PC-9 (cell line): ENCODE measurements at regions of chr10 and their contacts with region 1.

Region 1: DNA sequence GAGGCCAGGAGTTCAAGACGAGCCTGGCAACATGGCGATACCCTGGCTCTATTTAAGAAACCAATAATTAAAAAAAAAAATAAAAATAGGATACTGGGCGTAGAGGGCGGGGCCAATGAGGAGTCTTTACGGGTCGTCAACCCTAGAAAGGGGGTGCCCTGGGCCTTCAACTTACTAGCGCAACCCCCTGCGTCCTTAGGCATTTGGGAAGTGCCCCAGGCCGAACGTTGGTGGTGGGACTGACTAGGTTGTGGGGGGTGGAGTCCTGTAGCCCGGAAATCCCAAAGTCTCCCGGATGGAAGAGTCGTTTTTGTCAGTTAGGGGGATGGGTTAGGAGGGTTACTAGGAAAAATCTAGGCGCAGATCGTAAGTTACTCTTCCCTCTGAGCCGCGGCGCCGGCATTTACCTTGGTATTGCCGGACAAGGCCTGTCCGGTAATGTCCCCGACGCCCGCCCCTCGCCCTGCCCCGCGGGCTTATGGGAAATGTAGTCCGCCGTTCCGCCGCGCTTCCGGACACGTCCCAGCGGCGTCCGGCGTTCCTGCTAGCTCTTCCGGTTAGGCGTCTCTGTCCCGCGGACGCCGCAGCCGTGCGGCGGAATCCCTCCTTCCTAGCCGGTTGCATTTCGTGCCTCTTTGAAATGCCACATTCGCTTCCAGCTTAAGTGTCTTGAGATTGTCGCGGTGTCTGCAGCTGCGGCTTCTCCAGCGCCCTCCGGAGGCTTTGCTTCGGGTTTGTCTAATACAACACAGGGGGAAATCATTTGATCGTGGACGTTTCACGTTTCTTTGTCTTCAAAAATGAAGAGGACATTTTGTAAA is 1.3 kb upstream of the ACBD5 start:
- DNase-seq: peak; percentile 84 to 87
- H3K4me3 ChIP-seq: peak overlapping the region; percentile 72
- H3K27ac ChIP-seq: peak overlapping the region; percentile 74
- H3K4me1 ChIP-seq: peaks cover 14% of the 10 kb centered on the region; the same call in 1 of the 2 replicates
- H3K27me3 ChIP-seq: no peaks in the 10 kb centered on the region
- CTCF ChIP-seq: no peak; the same call in 1 of the 2 replicates

Region 2: GRCh38 chr10:26860443-26861204 is 381.2 kb before region 1 on chr10 and contains the start of gene ABI1:
- CTCF ChIA-PET with region 1: no interaction called
- POLR2A ChIA-PET with region 1: no interaction called
- intact Hi-C with region 1: loop called (anchors 2 kb)
- DNase-seq: peak; percentile 89 to 96
- H3K4me3 ChIP-seq: peak within 1 kb of the TSS; percentile 72
- H3K27ac ChIP-seq: peak within 1 kb of the TSS; percentile 85
- H3K4me1 ChIP-seq: peaks cover 11% of the 10 kb centered on the region
- H3K27me3 ChIP-seq: no peaks in the 10 kb centered on the region
- CTCF ChIP-seq: no peak
- total RNA-seq, gene ABI1: 41.3 and 50.8 TPM in 2 replicates

Region 3: DNA sequence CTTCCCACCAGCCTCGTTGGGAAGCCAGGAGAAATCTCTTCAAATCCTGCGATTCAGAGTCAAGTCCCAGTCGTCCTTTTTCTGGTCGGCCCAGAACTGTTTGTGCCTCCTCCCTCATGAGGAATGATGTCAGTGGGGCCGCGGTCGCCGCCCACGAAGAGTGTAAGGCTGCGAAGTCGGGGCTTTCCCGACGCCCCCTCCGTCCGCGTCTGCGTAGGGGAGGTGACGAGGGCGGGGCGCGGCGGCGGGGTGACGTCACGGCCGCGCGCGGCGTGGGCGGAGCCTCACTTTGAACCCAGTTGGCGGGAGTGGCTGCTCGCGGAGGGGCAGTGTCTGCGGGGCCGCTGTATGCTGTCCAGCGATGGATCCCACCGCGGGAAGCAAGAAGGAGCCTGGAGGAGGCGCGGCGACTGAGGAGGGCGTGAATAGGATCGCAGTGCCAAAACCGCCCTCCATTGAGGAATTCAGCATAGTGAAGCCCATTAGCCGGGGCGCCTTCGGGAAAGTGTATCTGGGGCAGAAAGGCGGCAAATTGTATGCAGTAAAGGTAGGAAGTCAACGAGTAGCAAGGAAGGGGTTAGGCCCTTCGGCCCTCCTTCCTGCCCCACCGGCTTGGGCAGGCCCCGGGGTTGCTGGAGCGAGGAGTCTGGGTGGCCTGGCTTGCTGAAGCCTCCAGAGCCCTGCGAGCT is 86.7 kb before region 1 on chr10 and contains the start of gene MASTL:
- CTCF ChIA-PET with region 1: no interaction called
- POLR2A ChIA-PET with region 1: interaction called, 13 read pairs
- intact Hi-C with region 1: loop called (anchors 2 kb)
- DNase-seq: peak; percentile 71 to 90
- H3K4me3 ChIP-seq: peak within 1 kb of the TSS; percentile 91
- H3K27ac ChIP-seq: peak within 1 kb of the TSS; percentile 97
- H3K4me1 ChIP-seq: peaks cover 18% of the 10 kb centered on the region
- H3K27me3 ChIP-seq: no peaks in the 10 kb centered on the region
- CTCF ChIP-seq: no peak
- total RNA-seq, gene MASTL: 13.0 and 17.4 TPM in 2 replicates

Region 4: DNA sequence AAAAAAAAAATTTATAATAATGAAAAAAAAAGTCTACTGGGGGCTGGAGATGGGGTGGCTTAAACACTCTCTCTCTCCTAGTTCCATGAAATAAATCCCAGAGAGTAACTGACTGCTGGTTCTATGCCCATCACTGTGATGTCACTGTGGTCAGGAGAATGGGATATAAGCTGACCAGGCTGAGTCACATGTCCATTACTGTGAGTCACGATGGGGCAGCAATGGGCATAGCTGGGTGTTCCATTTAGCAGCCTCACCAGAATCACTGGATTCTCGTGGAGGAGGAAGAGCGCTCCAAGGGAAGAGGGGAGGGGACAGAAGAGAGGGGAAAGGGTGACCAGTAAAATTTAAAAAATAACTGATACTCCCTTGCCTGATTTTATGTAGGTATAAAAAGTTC is 49.6 kb before region 1 on chr10:
- CTCF ChIA-PET with region 1: no interaction called
- POLR2A ChIA-PET with region 1: no interaction called
- intact Hi-C with region 1: loop called (anchors 2 kb)
- DNase-seq: peak; percentile 45 to 52
- H3K4me3 ChIP-seq: no peak overlapping the region
- H3K27ac ChIP-seq: no peak overlapping the region
- H3K4me1 ChIP-seq: no peaks in the 10 kb centered on the region
- H3K27me3 ChIP-seq: no peaks in the 10 kb centered on the region
- CTCF ChIP-seq: no peak

Region 5: GRCh38 chr10:27252267-27253000 is 10.6 kb after region 1 on chr10:
- CTCF ChIA-PET with region 1: no interaction called
- POLR2A ChIA-PET with region 1: no interaction called
- intact Hi-C with region 1: loop called (anchors 1 kb)
- DNase-seq: peak; percentile 44 to 88
- H3K4me3 ChIP-seq: peak overlapping the region; percentile 70
- H3K27ac ChIP-seq: peak overlapping the region; percentile 62
- H3K4me1 ChIP-seq: no peaks in the 10 kb centered on the region
- H3K27me3 ChIP-seq: no peaks in the 10 kb centered on the region
- CTCF ChIP-seq: peak; percentile 69

Region 6: DNA sequence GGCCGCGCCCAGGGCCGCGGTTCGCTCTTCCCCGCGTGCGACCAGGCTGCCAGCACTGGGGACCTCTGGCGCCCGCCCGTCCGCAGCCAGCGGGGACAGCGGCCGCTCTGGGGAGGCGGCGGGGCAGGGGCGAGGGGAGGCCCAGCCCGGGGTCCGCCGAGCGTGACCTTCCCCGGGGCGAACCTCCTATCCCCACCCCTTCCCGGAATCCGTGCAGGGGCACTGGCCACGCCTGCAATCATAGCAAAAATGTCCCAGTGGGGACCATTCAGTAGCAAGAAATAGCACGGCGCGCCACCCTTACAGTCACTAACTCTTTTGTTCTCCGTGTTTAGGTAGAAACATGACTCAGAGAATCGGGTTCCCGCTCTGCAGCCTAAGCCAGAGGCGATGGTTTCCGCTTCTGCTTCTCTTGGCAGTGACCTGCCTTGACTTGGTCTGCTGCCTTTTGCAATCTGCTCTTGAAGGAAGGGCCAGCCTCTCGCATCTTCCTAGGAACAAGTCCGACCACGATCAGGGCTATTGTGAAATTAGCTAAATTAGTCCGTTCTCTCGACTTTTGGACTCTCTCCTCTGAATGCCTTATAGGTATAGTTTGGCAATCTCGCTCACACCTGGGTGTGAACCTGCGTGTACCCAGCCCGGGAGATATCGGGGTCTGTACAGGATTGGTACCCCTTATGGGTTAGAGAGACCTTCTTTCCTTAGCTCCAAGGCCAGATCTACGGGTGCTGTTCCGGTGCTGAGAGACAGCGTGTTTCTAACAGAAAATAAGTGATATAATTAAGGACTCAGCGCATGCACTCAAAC is 78.1 kb after region 1 on chr10:
- CTCF ChIA-PET with region 1: no interaction called
- POLR2A ChIA-PET with region 1: no interaction called
- intact Hi-C with region 1: loop called (anchors 5 kb)
- DNase-seq: peak; percentile 74 to 86
- H3K4me3 ChIP-seq: peak overlapping the region; percentile 59; the same call in 1 of the 2 replicates
- H3K27ac ChIP-seq: peak overlapping the region; percentile 46; the same call in 1 of the 2 replicates
- H3K4me1 ChIP-seq: peaks cover 5% of the 10 kb centered on the region
- H3K27me3 ChIP-seq: no peaks in the 10 kb centered on the region
- CTCF ChIP-seq: no peak

Region 7: GRCh38 chr10:27504007-27504807 is 262.3 kb after region 1 on chr10 and contains the start of gene RAB18:
- CTCF ChIA-PET with region 1: no interaction called
- POLR2A ChIA-PET with region 1: no interaction called
- intact Hi-C with region 1: loop called (anchors 5 kb)
- DNase-seq: peak; percentile 80 to 94
- H3K4me3 ChIP-seq: peak within 1 kb of the TSS; percentile 81
- H3K27ac ChIP-seq: no peak within 1 kb of the TSS
- H3K4me1 ChIP-seq: peaks cover 14% of the 10 kb centered on the region
- H3K27me3 ChIP-seq: peaks cover 19% of the 10 kb centered on the region; the same call in 1 of the 2 replicates
- CTCF ChIP-seq: no peak
- total RNA-seq, gene RAB18: 63.1 and 63.8 TPM in 2 replicates